ENCODE measurements at regions of chr1 and their contacts with region 1.

Region 1: DNA sequence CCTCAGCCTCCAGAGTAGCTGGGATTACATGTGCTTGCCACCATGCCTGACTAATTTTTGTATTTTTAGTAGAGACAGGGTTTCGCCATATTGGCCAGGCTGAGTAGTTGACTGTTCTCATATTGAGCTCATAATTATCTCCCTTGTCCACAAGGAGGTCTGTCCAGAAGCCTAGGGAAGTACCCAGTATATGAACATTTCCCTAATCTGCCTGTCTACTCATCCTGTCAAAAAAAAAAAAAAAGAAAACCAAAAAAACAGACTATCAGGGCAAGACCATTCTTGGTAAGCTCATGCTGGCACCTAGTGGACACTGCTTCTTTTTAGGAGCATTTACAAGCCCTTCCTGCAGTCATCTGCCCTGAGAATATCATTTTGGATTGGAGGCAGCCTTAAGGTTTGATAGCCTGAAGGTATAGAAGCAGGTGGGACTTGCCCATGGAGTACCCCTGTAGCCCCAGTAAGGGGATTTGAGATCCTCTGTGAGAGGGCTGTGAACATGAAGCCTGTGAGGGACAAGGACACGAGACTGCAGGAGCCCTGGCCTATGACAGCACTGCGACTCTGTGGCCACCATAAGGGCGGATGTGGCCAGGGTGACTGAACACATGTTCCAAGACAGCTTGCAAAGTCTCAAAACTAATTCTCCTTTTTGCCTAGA is 10.8 kb upstream of the DUSP12 start:
- DNase-seq: peak; percentile 9
- H3K4me3 ChIP-seq: no peak overlapping the region
- H3K27ac ChIP-seq: no peak overlapping the region
- H3K4me1 ChIP-seq: no peaks in the 10 kb centered on the region
- H3K27me3 ChIP-seq: no peaks in the 10 kb centered on the region
- CTCF ChIP-seq: peak; percentile 79
- EP300 ChIP-seq: no peak
- RAD21 ChIP-seq: peak; percentile 73

Region 2: DNA sequence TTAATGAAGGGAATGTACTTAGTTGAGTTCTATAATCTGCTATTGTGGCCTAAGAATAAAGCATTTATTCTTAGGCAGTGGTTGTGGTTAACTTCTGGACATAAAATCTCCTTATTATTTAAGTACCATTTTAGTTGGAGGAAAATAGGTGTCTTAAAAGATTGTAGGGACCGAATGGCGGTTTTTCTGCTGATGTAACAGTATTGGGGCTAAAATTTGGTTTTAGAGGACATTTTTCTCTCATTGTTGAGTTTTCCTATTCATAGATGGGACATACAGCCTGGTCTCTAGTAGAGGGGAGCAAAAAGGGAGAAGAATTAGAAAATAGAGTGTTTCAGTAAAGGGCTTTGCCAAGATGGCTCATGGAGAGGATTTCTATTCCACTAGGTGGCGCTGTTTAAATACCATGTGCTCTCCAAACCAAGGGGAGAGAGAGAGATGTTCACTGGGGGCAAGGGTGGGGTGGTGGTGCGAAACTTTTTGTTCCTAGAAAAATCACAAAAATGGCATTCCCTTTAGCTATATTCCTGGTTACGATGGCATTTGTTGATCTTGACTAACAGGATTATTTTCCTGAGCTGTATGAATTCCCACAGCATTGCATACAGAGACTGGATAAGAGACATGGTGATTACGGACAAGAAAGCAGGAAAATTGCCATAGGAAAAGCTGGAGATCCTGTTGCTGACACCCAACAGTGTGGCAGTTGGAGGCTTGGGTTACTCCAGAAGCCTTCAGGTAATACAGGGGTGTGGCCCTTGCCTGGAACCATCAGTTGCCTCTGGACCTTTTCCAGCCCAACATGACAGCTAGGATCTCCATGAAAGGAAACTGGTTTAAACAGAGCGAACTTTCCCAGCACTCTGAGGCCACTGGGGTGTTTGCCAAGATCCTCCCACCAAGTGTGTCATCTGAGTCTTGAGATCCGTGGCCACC is 251.7 kb before region 1 on chr1:
- CTCF ChIA-PET with region 1: interaction called, 13 read pairs
- POLR2A ChIA-PET with region 1: no interaction called
- DNase-seq: peak; percentile 59
- H3K4me3 ChIP-seq: peak overlapping the region in 1 of 2 experiments; percentile 46; a peak in 2 of 4 replicates
- H3K27ac ChIP-seq: no peak overlapping the region
- H3K4me1 ChIP-seq: no peaks in the 10 kb centered on the region
- H3K27me3 ChIP-seq: peaks cover 50% of the 10 kb centered on the region
- CTCF ChIP-seq: peak; percentile 80
- EP300 ChIP-seq: no peak
- RAD21 ChIP-seq: peak; percentile 64

Region 3: GRCh38 chr1:161726596-161727457 is 11.9 kb before region 1 on chr1:
- CTCF ChIA-PET with region 1: interaction called, 62 read pairs
- POLR2A ChIA-PET with region 1: no interaction called
- DNase-seq: peak; percentile 96
- H3K4me3 ChIP-seq: peak overlapping the region; percentile 73 to 79
- H3K27ac ChIP-seq: peak overlapping the region; percentile 69 to 84
- H3K4me1 ChIP-seq: peaks cover 13 to 14% of the 10 kb centered on the region in 2 experiments; a peak in 2 of 4 replicates
- H3K27me3 ChIP-seq: no peaks in the 10 kb centered on the region
- CTCF ChIP-seq: no peak
- EP300 ChIP-seq: no peak
- RAD21 ChIP-seq: no peak

Region 4: DNA sequence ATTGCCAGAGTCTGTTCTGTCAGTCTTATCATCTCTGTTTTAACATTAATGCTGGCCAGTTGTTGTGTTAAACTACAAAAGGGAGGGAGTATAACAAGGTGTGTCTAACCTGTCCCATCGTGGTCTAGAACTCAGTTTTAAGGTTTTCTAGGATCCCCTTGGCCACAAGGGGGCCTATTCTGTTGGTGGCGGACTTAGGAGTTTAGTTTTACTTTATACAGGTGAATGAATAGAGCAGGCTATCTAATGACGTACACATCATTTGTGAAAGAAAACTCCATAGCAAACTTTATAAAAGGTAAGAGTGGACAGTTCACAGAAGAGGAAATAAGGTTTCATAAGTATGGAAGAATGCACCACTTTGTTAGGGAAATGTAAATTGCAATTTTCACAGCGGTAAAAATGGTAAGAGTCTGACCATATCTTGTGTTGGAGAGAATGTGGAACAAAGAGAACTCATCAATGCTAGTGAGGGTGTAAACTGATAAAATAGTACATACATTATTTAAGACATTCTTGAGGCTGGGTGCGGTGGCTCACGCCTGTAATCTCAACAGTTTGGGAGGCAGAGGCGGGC is 24.9 kb after region 1 on chr1:
- CTCF ChIA-PET with region 1: interaction called, 11 read pairs
- POLR2A ChIA-PET with region 1: no interaction called
- DNase-seq: peak; percentile 20
- H3K4me3 ChIP-seq: no peak overlapping the region
- H3K27ac ChIP-seq: no peak overlapping the region
- H3K4me1 ChIP-seq: peaks cover 4 to 5% of the 10 kb centered on the region in 2 experiments; a peak in 3 of 4 replicates
- H3K27me3 ChIP-seq: no peaks in the 10 kb centered on the region
- CTCF ChIP-seq: peak; percentile 65
- EP300 ChIP-seq: no peak
- RAD21 ChIP-seq: peak; percentile 22